Activated CD8-positive, alpha-beta memory T cell treated with anti-CD3 and anti-CD28 coated beads, Interleukin-2, amount 10 ng/mL, durations not matched to agents 7 days and 5 days (primary cell): ENCODE measurements at regions of chr19 and their contacts with region 1.

Region 1: GRCh38 chr19:4633140-4633967 is 6.0 kb upstream of the TNFAIP8L1 start:
- DNase-seq: peak; percentile 70
- ATAC-seq: peak; percentile 59
- H3K4me3 Mint-ChIP-seq: no peak overlapping the region
- H3K27ac Mint-ChIP-seq: no peak overlapping the region
- H3K4me1 Mint-ChIP-seq: peaks cover 29% of the 10 kb centered on the region
- H3K27me3 Mint-ChIP-seq: no peaks in the 10 kb centered on the region

Region 2: GRCh38 chr19:4567584-4568071 is 65.7 kb before region 1 on chr19:
- CTCF ChIA-PET with region 1: interaction called, 74 read pairs
- DNase-seq: peak; percentile 75
- ATAC-seq: peak; percentile 42
- H3K4me3 Mint-ChIP-seq: no peak overlapping the region
- H3K27ac Mint-ChIP-seq: no peak overlapping the region
- H3K4me1 Mint-ChIP-seq: no peaks in the 10 kb centered on the region
- H3K27me3 Mint-ChIP-seq: no peaks in the 10 kb centered on the region

Region 3: DNA sequence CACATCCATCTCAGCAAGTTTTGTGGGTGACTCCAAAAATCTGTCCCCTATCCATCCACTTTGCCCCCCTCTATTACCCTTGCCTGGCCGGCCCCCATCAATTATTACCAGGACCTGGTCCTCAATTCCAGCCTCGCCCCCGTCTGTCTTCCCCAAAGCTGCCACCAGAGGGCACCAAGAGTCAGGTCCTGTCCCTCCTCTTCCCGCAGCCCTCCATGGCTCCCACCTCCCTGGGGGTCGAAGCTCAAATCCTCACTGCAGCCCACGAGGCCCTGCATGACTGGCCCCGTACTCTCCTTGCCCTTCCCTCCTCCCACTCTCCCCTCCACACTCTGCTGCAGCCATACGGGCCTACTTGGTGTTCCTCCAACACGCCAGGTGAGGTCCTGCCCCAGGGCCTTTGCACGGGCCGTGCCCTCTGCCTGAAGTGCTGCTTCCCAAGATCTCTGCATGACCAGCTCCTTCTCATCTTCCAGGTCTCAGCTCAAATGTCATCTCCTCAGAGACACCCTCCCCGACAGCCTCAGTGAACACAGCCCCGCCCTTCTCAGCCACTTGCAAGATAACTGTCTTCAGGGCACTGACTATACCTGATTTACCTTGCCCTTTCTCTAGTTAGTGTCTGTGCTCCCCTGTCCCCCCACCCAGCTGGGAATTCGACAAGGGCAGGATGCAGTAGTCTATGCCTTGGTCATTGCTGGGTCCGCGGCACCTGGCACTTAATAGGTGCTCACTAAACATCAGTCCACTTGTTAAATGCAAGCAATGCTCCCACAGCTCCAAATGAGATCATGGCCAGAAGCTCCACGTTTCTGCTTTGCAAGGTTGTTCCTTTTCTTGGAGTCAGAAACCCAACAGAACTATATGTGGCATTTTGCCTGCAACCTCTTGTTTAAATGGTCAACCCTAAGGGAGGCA is 57.1 kb before region 1 on chr19:
- CTCF ChIA-PET with region 1: interaction called, 74 read pairs
- DNase-seq: peak; percentile 79
- ATAC-seq: peak; percentile 64
- H3K4me3 Mint-ChIP-seq: no peak overlapping the region
- H3K27ac Mint-ChIP-seq: no peak overlapping the region
- H3K4me1 Mint-ChIP-seq: no peaks in the 10 kb centered on the region
- H3K27me3 Mint-ChIP-seq: peaks cover 36% of the 10 kb centered on the region

Region 4: GRCh38 chr19:4690351-4690750 is 57.0 kb after region 1 on chr19:
- CTCF ChIA-PET with region 1: no interaction called
- DNase-seq: no peak
- ATAC-seq: no peak
- H3K4me3 Mint-ChIP-seq: no peak overlapping the region
- H3K27ac Mint-ChIP-seq: no peak overlapping the region
- H3K4me1 Mint-ChIP-seq: no peaks in the 10 kb centered on the region
- H3K27me3 Mint-ChIP-seq: no peaks in the 10 kb centered on the region

Region 5: DNA sequence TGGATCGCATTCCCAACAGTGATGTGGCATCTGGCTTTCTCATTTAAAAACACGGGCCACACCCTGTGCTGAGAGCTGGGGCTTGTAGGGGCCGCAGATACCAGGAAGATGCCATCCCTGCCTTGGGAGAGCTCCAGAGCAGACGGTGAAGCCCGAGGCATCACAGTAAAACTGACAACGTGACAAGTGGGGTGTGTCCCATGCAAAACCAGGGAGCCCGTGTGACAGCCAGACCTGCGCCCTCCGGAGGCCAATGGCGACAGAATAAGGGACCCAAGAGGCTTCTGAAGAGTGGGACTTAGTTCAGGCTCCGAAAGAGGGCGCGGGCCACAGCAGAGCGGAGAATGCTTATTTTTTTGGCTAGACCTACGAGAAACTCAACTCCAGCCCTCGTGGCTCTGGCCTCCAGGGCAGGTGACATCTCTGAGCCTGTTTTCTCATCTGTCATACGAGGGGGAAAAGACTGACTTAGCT is 67.2 kb after region 1 on chr19:
- CTCF ChIA-PET with region 1: no interaction called
- DNase-seq: no peak
- ATAC-seq: no peak
- H3K4me3 Mint-ChIP-seq: no peak overlapping the region
- H3K27ac Mint-ChIP-seq: no peak overlapping the region
- H3K4me1 Mint-ChIP-seq: no peaks in the 10 kb centered on the region
- H3K27me3 Mint-ChIP-seq: no peaks in the 10 kb centered on the region